Panc1 (cell line): ENCODE measurements at regions of chr6 and their contacts with region 1.

Region 1: DNA sequence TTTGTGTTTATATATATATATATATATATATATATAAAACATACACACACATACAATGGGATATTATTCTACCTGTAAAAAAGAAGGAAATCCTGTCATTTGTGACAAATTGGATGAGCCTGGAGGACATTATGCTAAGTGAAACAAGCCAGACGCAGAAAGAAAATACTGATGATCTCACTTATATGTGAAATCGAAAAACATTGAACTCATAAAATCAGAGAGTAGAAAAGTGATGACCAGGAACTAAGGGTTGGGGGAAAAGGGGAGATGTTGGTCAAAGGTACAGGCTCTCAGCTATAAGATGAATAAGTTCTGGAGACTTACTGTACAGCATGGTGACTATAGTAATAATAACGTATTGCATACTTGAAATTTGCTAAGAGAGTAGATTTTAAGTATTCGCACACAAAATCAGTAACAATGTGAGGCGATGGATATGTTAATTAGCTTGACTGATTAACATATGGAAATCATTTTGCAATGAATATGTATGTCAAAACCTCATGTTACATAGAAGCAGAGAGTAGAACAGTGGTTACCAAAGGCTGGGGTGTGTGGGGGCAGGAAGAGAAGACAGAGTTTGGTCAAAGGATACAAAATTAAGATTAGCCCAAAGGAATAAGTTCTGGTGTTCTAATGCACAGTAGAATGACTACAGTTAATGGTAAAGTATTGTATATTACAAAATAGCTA is 92.3 kb upstream of the PHACTR1 start:
- DNase-seq: no peak
- ATAC-seq: no peak
- H3K4me3 ChIP-seq: no peak overlapping the region
- H3K27ac ChIP-seq: no peak overlapping the region
- H3K4me1 ChIP-seq: no peaks in the 10 kb centered on the region
- H3K27me3 ChIP-seq: no peaks in the 10 kb centered on the region
- CTCF ChIP-seq: no peak

Region 2: DNA sequence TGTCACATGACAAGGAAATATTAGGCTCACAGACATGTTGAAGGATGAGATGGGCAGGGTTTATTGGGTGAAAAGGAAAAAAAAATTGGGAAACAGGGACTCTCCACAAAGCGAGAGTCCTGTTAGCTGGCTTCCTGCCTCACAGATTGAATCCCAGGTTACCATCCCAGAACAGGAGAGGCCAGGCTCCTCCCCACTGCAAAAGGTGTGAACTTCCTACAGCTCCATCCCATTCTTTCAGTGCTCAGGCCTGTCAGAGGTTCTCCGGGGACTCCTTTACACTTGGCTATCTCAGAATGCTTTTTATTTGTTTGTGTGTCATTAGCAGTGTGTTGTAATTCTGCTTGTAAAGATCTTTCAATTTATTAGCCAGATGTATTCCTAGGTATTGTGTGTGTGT is 960.8 kb before region 1 on chr6:
- CTCF ChIA-PET with region 1: interaction called, 10 read pairs
- POLR2A ChIA-PET with region 1: no interaction called
- in situ Hi-C with region 1: no loop called
- intact Hi-C with region 1: no loop called
- DNase-seq: no peak
- ATAC-seq: no peak
- H3K4me3 ChIP-seq: no peak overlapping the region
- H3K27ac ChIP-seq: no peak overlapping the region
- H3K4me1 ChIP-seq: no peaks in the 10 kb centered on the region
- H3K27me3 ChIP-seq: no peaks in the 10 kb centered on the region
- CTCF ChIP-seq: no peak